ENCODE measurements at regions of chr1 and their contacts with region 1.

Region 1: GRCh38 chr1:93304716-93305138 is 41.0 kb upstream of the DR1 start:
- DNase-seq: peak; percentile 51 to 60 (median 59)
- H3K4me3 ChIP-seq: no peak overlapping the region
- H3K4me3 Mint-ChIP-seq: no peak overlapping the region
- H3K27ac ChIP-seq: no peak overlapping the region
- H3K27ac Mint-ChIP-seq: no peak overlapping the region
- H3K4me1 ChIP-seq: no peaks in the 10 kb centered on the region
- H3K4me1 Mint-ChIP-seq: peaks cover 0 to 1% (median 0%) of the 10 kb centered on the region in 4 donors
- H3K27me3 ChIP-seq: no peaks in the 10 kb centered on the region
- H3K27me3 Mint-ChIP-seq: no peaks in the 10 kb centered on the region

Region 2: DNA sequence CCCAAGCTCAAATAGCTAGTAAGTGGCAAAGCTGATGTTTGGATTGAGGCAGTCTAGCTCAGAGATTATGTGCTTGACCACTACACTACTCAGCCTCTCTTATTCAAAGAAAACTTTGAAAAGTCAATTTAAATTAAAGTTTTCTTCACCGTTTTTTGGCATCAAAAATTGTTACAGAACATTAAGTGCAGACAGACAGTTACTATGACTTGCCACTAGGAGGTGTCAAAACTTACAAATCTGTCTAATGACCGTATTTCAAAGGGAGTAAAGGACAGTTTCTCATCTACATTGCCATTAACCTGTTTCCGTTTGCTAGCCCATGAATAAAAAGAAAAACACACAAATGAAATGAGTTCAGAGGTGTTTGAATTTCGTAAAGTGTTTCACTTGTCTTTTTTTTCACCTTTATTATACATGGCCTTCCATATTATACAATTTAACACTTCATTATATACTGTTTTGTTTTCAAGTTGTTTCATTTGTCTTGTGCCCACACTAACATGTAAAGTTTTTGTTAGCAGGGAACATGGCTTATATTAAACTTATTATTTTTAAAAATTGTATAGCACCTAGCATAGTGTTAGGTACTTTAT is 283.1 kb before region 1 on chr1:
- CTCF ChIA-PET with region 1: interaction called, 8 read pairs
- POLR2A ChIA-PET with region 1: no interaction called
- intact Hi-C with region 1: loop called (anchors 2 kb)
- DNase-seq: peak in 4 of 5 donors; percentile 59 to 63 (median 60)
- H3K4me3 ChIP-seq: no peak overlapping the region
- H3K4me3 Mint-ChIP-seq: no peak overlapping the region
- H3K27ac ChIP-seq: no peak overlapping the region
- H3K27ac Mint-ChIP-seq: no peak overlapping the region
- H3K4me1 ChIP-seq: no peaks in the 10 kb centered on the region
- H3K4me1 Mint-ChIP-seq: peaks cover 0 to 3% (median 2%) of the 10 kb centered on the region in 4 donors
- H3K27me3 ChIP-seq: no peaks in the 10 kb centered on the region
- H3K27me3 Mint-ChIP-seq: peaks cover 3 to 9% of the 10 kb centered on the region in 2 donors

Region 3: DNA sequence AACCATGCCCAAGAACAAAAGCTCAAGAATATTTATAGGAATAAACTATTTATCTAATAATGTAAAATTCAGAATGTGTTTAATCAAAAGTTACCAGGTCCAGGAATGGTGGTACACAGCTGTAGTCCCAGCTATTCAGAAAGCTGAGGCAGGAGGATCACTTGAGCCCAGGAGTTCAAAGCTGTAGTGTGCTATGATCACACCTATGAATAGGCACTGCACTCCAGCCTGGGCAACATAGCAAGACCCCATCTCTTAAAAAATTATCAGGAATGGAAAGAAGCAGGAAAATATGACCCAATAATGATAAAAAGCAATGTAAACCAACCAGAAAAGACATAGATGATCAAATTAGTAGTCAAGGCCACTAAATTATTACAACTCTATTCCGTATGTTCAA is 21.2 kb before region 1 on chr1:
- CTCF ChIA-PET with region 1: interaction called, 12 read pairs
- POLR2A ChIA-PET with region 1: no interaction called
- intact Hi-C with region 1: no loop called
- DNase-seq: no peak
- H3K4me3 ChIP-seq: no peak overlapping the region
- H3K4me3 Mint-ChIP-seq: no peak overlapping the region
- H3K27ac ChIP-seq: no peak overlapping the region
- H3K27ac Mint-ChIP-seq: no peak overlapping the region
- H3K4me1 ChIP-seq: no peaks in the 10 kb centered on the region
- H3K4me1 Mint-ChIP-seq: no peaks in the 10 kb centered on the region
- H3K27me3 ChIP-seq: no peaks in the 10 kb centered on the region
- H3K27me3 Mint-ChIP-seq: no peaks in the 10 kb centered on the region

Region 4: DNA sequence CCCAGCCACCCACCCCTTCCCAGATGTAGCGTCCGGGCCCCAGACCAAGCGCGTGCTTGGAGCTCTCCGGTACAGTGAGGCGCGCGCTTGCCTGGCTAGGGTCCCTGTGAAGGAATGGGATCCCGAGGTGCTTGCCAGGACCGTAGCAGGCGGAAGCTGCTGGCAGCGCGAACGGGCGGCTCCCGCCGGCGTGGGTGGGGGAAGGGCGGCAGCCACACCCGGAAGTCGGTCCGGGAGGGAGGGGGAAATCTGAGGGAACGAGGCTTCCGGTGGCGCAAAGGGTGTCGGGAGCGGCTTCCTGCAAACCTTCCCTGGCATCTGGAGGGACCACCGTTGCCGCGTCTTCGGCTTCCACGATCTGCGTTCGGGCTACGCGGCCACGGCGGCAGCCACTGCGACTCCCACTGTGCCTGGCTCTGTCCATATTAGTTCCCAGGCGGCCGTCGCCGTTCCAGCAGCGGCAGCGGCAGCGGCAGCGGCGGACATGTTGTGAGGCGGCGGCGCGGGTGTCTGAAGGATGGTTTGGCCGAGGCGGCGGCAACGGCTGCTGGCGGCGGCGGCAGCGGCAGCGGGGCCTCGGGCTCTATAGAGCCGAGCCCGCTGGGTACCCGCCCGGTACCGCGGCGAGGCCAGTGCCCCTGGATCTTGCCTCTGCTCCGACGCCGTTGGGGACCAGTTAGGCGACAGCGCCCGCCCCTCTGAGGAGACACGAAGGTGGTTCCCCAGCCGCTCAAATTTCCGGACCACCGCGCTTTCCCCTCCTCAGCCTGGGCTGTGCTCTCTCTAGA is 41.1 kb after region 1 on chr1 and contains the start of gene DR1:
- CTCF ChIA-PET with region 1: interaction called, 33 read pairs
- POLR2A ChIA-PET with region 1: interaction called, 8 read pairs
- intact Hi-C with region 1: loop called (anchors 2 kb)
- DNase-seq: peak; percentile 87 to 92 (median 89)
- H3K4me3 ChIP-seq: peak within 1 kb of the TSS; percentile 80 to 100
- H3K4me3 Mint-ChIP-seq: peak within 1 kb of the TSS; percentile 96 to 99 (median 98)
- H3K27ac ChIP-seq: peak within 1 kb of the TSS; percentile 91
- H3K27ac Mint-ChIP-seq: peak within 1 kb of the TSS; percentile 95 to 99 (median 98)
- H3K4me1 ChIP-seq: peaks cover 46% of the 10 kb centered on the region
- H3K4me1 Mint-ChIP-seq: peaks cover 23 to 59% (median 30%) of the 10 kb centered on the region in 4 donors
- H3K27me3 ChIP-seq: no peaks in the 10 kb centered on the region
- H3K27me3 Mint-ChIP-seq: no peaks in the 10 kb centered on the region
- total RNA-seq, gene DR1: 71.8 to 71.9 TPM

Region 5: GRCh38 chr1:93358293-93358692 is 53.6 kb after region 1 on chr1:
- CTCF ChIA-PET with region 1: interaction called, 14 read pairs
- POLR2A ChIA-PET with region 1: no interaction called
- intact Hi-C with region 1: no loop called
- DNase-seq: no peak
- H3K4me3 ChIP-seq: no peak overlapping the region
- H3K4me3 Mint-ChIP-seq: peak overlapping the region in 4 of 8 donors; percentile 1 to 27 (median 19)
- H3K27ac ChIP-seq: no peak overlapping the region
- H3K27ac Mint-ChIP-seq: peak overlapping the region in 4 of 7 donors; percentile 13 to 70 (median 30)
- H3K4me1 ChIP-seq: peaks cover 74% of the 10 kb centered on the region
- H3K4me1 Mint-ChIP-seq: peaks cover 36 to 71% (median 53%) of the 10 kb centered on the region in 4 donors
- H3K27me3 ChIP-seq: no peaks in the 10 kb centered on the region
- H3K27me3 Mint-ChIP-seq: no peaks in the 10 kb centered on the region

Region 6: GRCh38 chr1:93437976-93438605 is 133.4 kb after region 1 on chr1:
- CTCF ChIA-PET with region 1: interaction called, 12 read pairs
- POLR2A ChIA-PET with region 1: no interaction called
- intact Hi-C with region 1: loop called (anchors 1 kb)
- DNase-seq: peak in 4 of 5 donors; percentile 33 to 44 (median 40)
- H3K4me3 ChIP-seq: no peak overlapping the region
- H3K4me3 Mint-ChIP-seq: peak overlapping the region in 1 of 8 donors; percentile 15
- H3K27ac ChIP-seq: no peak overlapping the region
- H3K27ac Mint-ChIP-seq: no peak overlapping the region
- H3K4me1 ChIP-seq: no peaks in the 10 kb centered on the region
- H3K4me1 Mint-ChIP-seq: peaks cover 0 to 7% (median 3%) of the 10 kb centered on the region in 4 donors
- H3K27me3 ChIP-seq: no peaks in the 10 kb centered on the region
- H3K27me3 Mint-ChIP-seq: peaks cover 4 to 7% of the 10 kb centered on the region in 2 donors

Region 7: DNA sequence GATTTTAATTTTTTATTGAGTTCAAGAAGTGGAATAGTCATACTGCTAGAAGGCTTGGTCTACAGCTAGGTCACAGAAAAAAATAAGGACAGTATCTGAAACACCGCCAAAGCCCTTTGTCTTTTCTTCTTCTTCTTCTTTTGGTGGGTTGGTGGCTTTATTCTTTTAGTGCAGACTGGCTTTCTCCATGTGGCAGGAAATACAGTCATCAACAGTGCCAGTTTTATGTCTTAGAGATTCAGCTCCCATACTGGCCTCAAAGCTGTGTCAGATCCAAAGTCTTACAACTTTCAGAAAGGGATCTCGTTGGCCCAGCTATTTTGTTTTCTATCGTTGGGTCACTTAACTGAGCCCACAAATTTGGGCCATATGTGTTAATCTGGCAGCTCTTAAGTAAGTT is 201.4 kb after region 1 on chr1:
- CTCF ChIA-PET with region 1: no interaction called
- POLR2A ChIA-PET with region 1: no interaction called
- intact Hi-C with region 1: no loop called
- DNase-seq: no peak
- H3K4me3 ChIP-seq: no peak overlapping the region
- H3K4me3 Mint-ChIP-seq: no peak overlapping the region
- H3K27ac ChIP-seq: no peak overlapping the region
- H3K27ac Mint-ChIP-seq: no peak overlapping the region
- H3K4me1 ChIP-seq: no peaks in the 10 kb centered on the region
- H3K4me1 Mint-ChIP-seq: peaks cover 0 to 10% (median 5%) of the 10 kb centered on the region in 4 donors
- H3K27me3 ChIP-seq: no peaks in the 10 kb centered on the region
- H3K27me3 Mint-ChIP-seq: peaks cover 1% of the 10 kb centered on the region in 2 donors

Region 8: GRCh38 chr1:93814059-93814794 is 509.5 kb after region 1 on chr1:
- CTCF ChIA-PET with region 1: interaction called, 14 read pairs
- POLR2A ChIA-PET with region 1: no interaction called
- intact Hi-C with region 1: loop called (anchors 10 kb)
- DNase-seq: peak in 4 of 5 donors; percentile 33 to 51 (median 38)
- H3K4me3 ChIP-seq: no peak overlapping the region
- H3K4me3 Mint-ChIP-seq: no peak overlapping the region
- H3K27ac ChIP-seq: no peak overlapping the region
- H3K27ac Mint-ChIP-seq: no peak overlapping the region
- H3K4me1 ChIP-seq: peaks cover 20% of the 10 kb centered on the region
- H3K4me1 Mint-ChIP-seq: peaks cover 13 to 23% (median 17%) of the 10 kb centered on the region in 4 donors
- H3K27me3 ChIP-seq: no peaks in the 10 kb centered on the region
- H3K27me3 Mint-ChIP-seq: no peaks in the 10 kb centered on the region